ENCODE measurements at regions of chr4 and their contacts with region 1.

Region 1: DNA sequence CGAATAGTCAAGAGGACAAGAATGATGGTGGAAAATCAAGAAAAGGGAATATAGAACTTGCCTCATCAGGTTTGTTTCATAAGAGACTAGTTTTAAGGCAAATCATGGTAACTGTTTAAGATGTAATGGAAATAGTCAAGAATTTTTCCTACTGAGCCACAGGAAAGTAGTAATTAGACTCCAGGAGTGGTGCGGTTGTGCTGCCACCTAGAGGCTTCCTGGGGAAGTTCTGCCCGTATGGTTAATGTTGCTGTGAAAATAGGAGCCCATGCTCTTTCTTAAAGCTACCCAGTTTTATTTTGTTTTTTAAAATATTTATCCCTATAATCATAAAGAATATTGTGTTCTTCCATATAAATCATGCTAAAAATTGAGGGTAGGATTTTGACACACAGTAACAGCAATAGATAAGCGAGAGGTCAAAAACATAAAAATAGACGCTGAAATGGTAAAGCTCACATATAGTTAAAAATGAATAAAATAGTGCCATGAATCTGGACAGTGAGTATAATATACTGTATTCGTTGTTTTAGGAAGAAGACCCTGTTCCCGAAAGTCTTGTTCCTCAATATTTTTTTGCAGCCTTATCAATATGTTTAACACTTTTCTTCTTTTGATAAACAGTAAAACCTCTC is 87.0 kb downstream of the PHOX2B start:
- DNase-seq: no peak
- H3K4me3 ChIP-seq: no peak overlapping the region
- H3K27ac ChIP-seq: peak overlapping the region in 1 of 8 donors; percentile 25
- H3K4me1 ChIP-seq: no peaks in the 10 kb centered on the region
- H3K27me3 ChIP-seq: peaks cover 0 to 10% (median 0%) of the 10 kb centered on the region in 7 donors
- CTCF ChIP-seq: peak; percentile 61 to 91 (median 79)
- POLR2A ChIP-seq: no peak

Region 2: GRCh38 chr4:41281038-41281634 is 380.4 kb before region 1 on chr4:
- intact Hi-C with region 1: loop called (anchors 5 kb)
- DNase-seq: no peak
- H3K4me3 ChIP-seq: no peak overlapping the region
- H3K27ac ChIP-seq: no peak overlapping the region
- H3K4me1 ChIP-seq: no peaks in the 10 kb centered on the region
- H3K27me3 ChIP-seq: peaks cover 0 to 27% (median 0%) of the 10 kb centered on the region in 7 donors
- CTCF ChIP-seq: peak; percentile 70 to 92 (median 81)
- POLR2A ChIP-seq: no peak

Region 3: GRCh38 chr4:41569961-41570360 is 91.6 kb before region 1 on chr4:
- intact Hi-C with region 1: no loop called
- DNase-seq: no peak
- H3K4me3 ChIP-seq: no peak overlapping the region
- H3K27ac ChIP-seq: peak overlapping the region in 4 of 8 donors; percentile 12 to 69 (median 30)
- H3K4me1 ChIP-seq: peaks cover 0 to 36% (median 14%) of the 10 kb centered on the region in 6 donors
- H3K27me3 ChIP-seq: no peaks in the 10 kb centered on the region
- CTCF ChIP-seq: no peak
- POLR2A ChIP-seq: no peak

Region 4: GRCh38 chr4:41600243-41600912 is 61.2 kb before region 1 on chr4:
- intact Hi-C with region 1: no loop called
- DNase-seq: no peak
- H3K4me3 ChIP-seq: no peak overlapping the region
- H3K27ac ChIP-seq: no peak overlapping the region
- H3K4me1 ChIP-seq: peaks cover 0 to 3% (median 0%) of the 10 kb centered on the region in 6 donors
- H3K27me3 ChIP-seq: no peaks in the 10 kb centered on the region
- CTCF ChIP-seq: no peak
- POLR2A ChIP-seq: no peak

Measured in spleen (tissue), 13 donors.